ENCODE measurements at regions of chr7 and their contacts with region 1.

Region 1: DNA sequence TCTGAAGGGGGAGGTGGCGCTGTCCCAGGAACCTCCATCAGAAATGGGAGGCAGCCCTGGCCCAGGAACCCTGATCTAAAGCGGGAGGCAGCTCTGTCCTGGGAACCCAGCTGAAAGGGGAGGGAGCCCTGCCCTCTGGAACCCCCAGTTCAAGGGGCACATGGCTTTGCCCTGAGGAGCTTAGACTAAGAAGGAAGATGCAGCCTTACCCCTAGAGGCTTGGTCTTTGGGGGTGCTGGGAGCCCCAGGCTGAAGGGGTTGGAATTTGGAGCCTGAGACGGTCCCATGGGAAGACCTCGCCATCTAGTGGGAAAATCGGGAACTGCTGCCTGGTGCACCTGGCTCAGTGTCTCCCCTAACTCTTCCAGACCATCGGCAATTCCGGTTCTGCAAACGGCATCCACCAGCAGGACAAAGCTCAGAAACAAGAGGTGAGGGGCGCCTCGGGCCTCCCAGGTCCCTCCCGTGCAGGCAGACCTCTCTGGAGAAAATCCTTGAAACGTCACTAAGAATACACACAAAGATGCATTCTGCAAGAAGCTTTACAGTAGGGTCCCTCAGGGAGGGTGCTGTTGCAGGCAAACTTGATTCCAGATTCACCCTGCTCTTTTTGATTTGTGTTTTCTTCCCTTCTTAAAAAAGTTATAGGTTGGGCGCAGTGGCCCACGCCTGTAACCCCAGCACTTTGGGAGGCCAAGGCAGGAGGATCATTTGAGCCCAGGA is 52.4 kb upstream of the GTF2IRD1 start:
- DNase-seq: peak; percentile 65
- H3K4me3 ChIP-seq: no peak overlapping the region
- H3K27ac ChIP-seq: no peak overlapping the region
- H3K4me1 ChIP-seq: no peaks in the 10 kb centered on the region
- H3K27me3 ChIP-seq: no peaks in the 10 kb centered on the region
- CTCF ChIP-seq: peak; percentile 82 to 94 (median 90)
- POLR2A ChIP-seq: no peak

Region 2: GRCh38 chr7:74061840-74062539 is 339.3 kb before region 1 on chr7:
- intact Hi-C with region 1: loop called (anchors 5 kb)
- DNase-seq: peak; percentile 77
- H3K4me3 ChIP-seq: peak overlapping the region in 1 of 2 donors; percentile 25
- H3K27ac ChIP-seq: peak overlapping the region; percentile 86 to 91
- H3K4me1 ChIP-seq: no peaks in the 10 kb centered on the region
- H3K27me3 ChIP-seq: no peaks in the 10 kb centered on the region
- CTCF ChIP-seq: no peak
- POLR2A ChIP-seq: peak; percentile 67

Region 3: DNA sequence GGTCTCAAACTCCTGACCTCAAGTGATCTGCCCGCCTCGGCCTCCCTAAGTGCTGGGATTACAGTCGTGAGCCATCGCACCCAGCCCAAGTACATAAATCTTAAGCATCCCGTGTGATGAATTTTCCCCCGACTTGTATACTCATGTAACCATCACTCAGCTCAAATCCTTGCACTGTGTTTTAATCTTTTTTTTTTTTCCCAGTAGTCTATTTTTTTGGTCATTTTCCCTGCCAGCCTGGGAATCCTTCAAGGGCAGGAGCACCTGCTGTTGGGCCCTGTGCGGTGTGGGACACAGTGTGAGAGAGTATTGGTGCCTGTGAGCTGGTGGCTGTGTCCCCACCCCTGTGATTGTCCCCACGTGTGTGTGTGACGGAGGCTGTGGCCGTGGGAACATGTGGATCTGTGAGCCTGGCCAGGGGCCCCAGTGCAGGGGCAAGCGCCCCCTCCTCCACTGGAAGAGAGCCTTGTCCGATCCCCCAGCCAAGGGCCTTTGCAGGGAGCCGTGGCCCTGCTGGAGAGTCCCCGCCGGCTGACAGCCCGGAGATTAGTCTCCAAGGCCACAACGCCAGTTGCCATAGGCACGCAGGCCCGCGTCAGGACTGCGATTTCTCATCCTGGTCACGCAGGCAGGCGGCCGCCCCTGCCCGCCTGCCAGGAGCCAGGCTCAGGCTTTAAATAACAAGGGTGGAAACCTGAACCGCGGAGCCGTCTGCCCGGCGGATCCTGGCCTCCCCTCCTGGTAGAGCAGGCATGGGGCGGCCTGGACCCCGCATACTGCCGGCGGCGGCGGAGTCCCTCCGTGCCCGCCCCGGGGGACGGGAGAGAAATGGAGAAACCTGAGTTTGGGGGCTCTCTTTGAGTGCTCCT is 78.9 kb after region 1 on chr7:
- intact Hi-C with region 1: no loop called
- DNase-seq: peak; percentile 79
- H3K4me3 ChIP-seq: peak overlapping the region; percentile 7
- H3K27ac ChIP-seq: peak overlapping the region; percentile 86 to 90
- H3K4me1 ChIP-seq: peaks cover 45% of the 10 kb centered on the region
- H3K27me3 ChIP-seq: no peaks in the 10 kb centered on the region
- CTCF ChIP-seq: peak in 2 of 4 experiments; percentile 4 to 11
- POLR2A ChIP-seq: peak; percentile 55

Measured in prostate gland (tissue), 2 donors.